CD4-positive, alpha-beta memory T cell (primary cell): ENCODE measurements at regions of chr12 and their contacts with region 1.

Region 1: DNA sequence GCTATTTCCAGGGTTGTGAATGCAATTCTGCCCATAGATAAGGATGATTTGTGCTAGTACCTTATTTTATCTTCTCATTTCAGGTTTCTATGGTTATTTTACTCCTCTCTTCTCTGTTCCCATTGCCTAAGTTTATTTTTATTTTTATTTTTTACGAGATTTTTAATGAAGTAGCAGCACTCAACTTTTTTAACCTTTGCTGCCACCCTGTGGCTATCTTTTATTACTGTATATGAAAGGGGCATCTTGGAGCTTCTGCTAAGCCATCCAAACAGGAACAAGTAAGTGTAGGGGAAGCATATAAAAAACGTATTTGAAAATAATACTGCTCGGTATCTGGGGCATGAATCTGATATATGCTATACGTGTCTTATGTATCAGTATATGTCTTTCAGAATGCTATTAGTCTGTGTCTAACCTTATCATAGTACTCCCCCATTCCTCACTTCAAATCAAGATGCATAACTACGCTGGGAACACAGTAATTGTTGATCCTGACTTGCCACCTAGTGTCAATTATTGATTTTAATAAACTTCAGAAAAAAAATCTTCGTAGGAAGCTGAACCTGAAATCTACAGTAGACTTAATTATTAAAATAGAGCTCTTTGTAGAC is 60.3 kb downstream of the KLRG1 start:
- DNase-seq: peak; percentile 39 to 66 (median 60)
- H3K4me3 ChIP-seq: no peak overlapping the region
- H3K4me3 Mint-ChIP-seq: peak overlapping the region in 2 of 8 donors; percentile 26 to 55
- H3K27ac ChIP-seq: no peak overlapping the region
- H3K27ac Mint-ChIP-seq: peak overlapping the region; percentile 26 to 90 (median 51)
- H3K4me1 ChIP-seq: peaks cover 25% of the 10 kb centered on the region
- H3K4me1 Mint-ChIP-seq: peaks cover 20 to 46% (median 35%) of the 10 kb centered on the region in 4 donors
- H3K27me3 ChIP-seq: no peaks in the 10 kb centered on the region
- H3K27me3 Mint-ChIP-seq: no peaks in the 10 kb centered on the region

Region 2: DNA sequence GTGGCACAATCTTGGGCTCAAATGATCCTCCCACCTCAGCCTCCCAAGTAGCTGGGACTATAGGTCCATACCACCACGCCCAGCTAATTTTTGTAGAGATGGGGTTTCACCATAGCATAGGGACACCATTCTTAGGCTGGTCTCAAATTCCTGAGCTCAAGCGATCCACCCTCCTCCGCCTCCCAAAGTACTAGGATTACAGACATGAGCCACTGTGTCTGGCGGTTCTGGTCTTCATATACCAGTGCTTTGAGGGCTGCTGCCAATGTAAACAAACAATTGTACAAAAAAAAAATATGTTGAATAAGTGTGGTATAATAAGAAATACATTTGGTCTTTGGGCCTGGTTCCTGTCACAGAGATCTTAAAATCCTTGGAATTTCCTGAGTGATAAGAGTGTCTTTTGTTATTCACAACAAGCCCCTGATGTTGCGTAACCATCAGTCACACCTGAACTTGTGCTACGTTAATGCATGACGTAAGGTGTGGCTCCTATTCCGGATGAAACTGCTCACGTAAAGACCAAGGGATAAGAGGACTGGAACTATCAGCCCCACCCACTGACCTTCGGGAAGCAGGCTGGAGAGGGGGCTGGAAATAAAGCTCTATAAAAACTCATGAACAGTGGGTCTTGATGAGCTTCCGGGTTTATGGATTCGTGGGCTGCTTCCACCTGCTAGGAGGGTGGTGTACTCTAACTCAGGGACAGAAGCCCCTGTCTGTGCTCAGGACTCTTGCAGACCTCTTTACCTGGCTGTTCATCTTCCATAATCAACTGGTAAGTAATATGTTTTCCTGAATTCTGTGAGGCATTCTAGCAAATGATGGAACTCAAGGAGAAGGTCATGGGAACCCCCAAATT is 368.4 kb before region 1 on chr12:
- CTCF ChIA-PET with region 1: interaction called, 101 read pairs
- POLR2A ChIA-PET with region 1: no interaction called
- intact Hi-C with region 1: loop called (anchors 1 kb)
- DNase-seq: no peak
- H3K4me3 ChIP-seq: no peak overlapping the region
- H3K4me3 Mint-ChIP-seq: no peak overlapping the region
- H3K27ac ChIP-seq: no peak overlapping the region
- H3K27ac Mint-ChIP-seq: peak overlapping the region in 1 of 7 donors; percentile 30
- H3K4me1 ChIP-seq: no peaks in the 10 kb centered on the region
- H3K4me1 Mint-ChIP-seq: peaks cover 0 to 9% (median 5%) of the 10 kb centered on the region in 4 donors
- H3K27me3 ChIP-seq: no peaks in the 10 kb centered on the region
- H3K27me3 Mint-ChIP-seq: peaks cover 5 to 10% of the 10 kb centered on the region in 2 donors

Region 3: GRCh38 chr12:8860165-8860961 is 189.3 kb before region 1 on chr12:
- CTCF ChIA-PET with region 1: interaction called, 28 read pairs
- POLR2A ChIA-PET with region 1: no interaction called
- intact Hi-C with region 1: no loop called
- DNase-seq: peak in 4 of 5 donors; percentile 18 to 28 (median 25)
- H3K4me3 ChIP-seq: no peak overlapping the region
- H3K4me3 Mint-ChIP-seq: no peak overlapping the region
- H3K27ac ChIP-seq: no peak overlapping the region
- H3K27ac Mint-ChIP-seq: no peak overlapping the region
- H3K4me1 ChIP-seq: no peaks in the 10 kb centered on the region
- H3K4me1 Mint-ChIP-seq: no peaks in the 10 kb centered on the region
- H3K27me3 ChIP-seq: no peaks in the 10 kb centered on the region
- H3K27me3 Mint-ChIP-seq: peaks cover 0 to 4% of the 10 kb centered on the region in 2 donors

Region 4: DNA sequence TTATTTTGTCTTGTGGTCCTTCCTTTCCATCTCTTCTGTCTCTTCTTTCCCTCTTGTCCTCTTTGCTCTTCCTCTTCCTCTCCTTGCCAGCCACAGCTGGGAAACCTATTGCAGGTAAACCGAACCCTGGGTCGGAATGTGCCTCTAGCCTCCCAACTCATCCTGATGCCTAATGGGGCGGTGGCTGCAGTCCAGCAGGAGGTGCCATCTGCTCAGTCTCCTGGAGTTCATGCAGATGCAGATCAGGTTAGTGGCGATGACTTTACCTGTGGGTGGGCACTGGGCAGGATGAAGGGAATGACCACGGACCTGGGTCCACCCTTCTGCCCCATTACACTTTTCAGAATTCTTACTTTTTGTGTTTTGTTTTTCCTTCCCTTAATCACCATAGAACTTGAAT is 127.1 kb before region 1 on chr12:
- CTCF ChIA-PET with region 1: interaction called, 10 read pairs
- POLR2A ChIA-PET with region 1: no interaction called
- intact Hi-C with region 1: no loop called
- DNase-seq: no peak
- H3K4me3 ChIP-seq: no peak overlapping the region
- H3K4me3 Mint-ChIP-seq: no peak overlapping the region
- H3K27ac ChIP-seq: no peak overlapping the region
- H3K27ac Mint-ChIP-seq: peak overlapping the region in 3 of 7 donors; percentile 28 to 62 (median 38)
- H3K4me1 ChIP-seq: no peaks in the 10 kb centered on the region
- H3K4me1 Mint-ChIP-seq: peaks cover 0 to 6% (median 1%) of the 10 kb centered on the region in 4 donors
- H3K27me3 ChIP-seq: no peaks in the 10 kb centered on the region
- H3K27me3 Mint-ChIP-seq: no peaks in the 10 kb centered on the region

Region 5: GRCh38 chr12:9064201-9064814 is 14.7 kb after region 1 on chr12:
- CTCF ChIA-PET with region 1: interaction called, 14 read pairs
- POLR2A ChIA-PET with region 1: interaction called, 4 read pairs
- intact Hi-C with region 1: no loop called
- DNase-seq: peak; percentile 36 to 47 (median 45)
- H3K4me3 ChIP-seq: peak overlapping the region in 1 of 2 donors; percentile 40
- H3K4me3 Mint-ChIP-seq: peak overlapping the region; percentile 71 to 87 (median 80)
- H3K27ac ChIP-seq: peak overlapping the region; percentile 15
- H3K27ac Mint-ChIP-seq: peak overlapping the region in 4 of 7 donors; percentile 1 to 72 (median 18)
- H3K4me1 ChIP-seq: peaks cover 8% of the 10 kb centered on the region
- H3K4me1 Mint-ChIP-seq: peaks cover 6 to 13% (median 8%) of the 10 kb centered on the region in 4 donors
- H3K27me3 ChIP-seq: no peaks in the 10 kb centered on the region
- H3K27me3 Mint-ChIP-seq: no peaks in the 10 kb centered on the region